ENCODE measurements at regions of chr4 and their contacts with region 1.

Region 1: DNA sequence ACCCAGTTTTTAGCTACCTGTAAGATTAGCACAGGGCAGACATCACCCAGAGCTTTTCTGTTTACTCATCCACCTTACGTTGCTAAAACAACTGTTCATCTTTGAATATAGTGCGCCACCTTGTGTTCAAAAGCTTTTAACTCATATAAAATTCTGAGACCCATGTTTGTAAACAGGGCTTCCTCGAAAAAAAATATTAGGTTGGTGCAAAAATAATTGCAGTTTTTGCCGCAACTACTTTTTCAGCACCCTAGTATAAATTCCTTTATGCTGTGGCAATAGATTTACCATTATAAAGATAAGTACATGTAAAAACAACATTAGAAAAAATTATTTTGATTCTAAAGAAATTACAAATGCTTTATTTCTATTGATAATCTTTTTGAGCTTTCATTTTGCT is 147.9 kb downstream of the LRBA start:
- DNase-seq: peak; percentile 60 to 72
- H3K4me3 ChIP-seq: no peak overlapping the region
- H3K4me1 ChIP-seq: no peaks in the 10 kb centered on the region
- H3K27me3 ChIP-seq: no peaks in the 10 kb centered on the region

Region 2: GRCh38 chr4:150010525-150011126 is 856.5 kb before region 1 on chr4:
- in situ Hi-C with region 1: loop called (anchors 25 kb)
- DNase-seq: peak; percentile 61 to 72
- H3K4me3 ChIP-seq: no peak overlapping the region
- H3K4me1 ChIP-seq: peaks cover 10% of the 10 kb centered on the region
- H3K27me3 ChIP-seq: no peaks in the 10 kb centered on the region

Region 3: GRCh38 chr4:150297861-150298474 is 569.2 kb before region 1 on chr4:
- in situ Hi-C with region 1: loop called (anchors 10 kb)
- DNase-seq: peak; percentile 55 to 67
- H3K4me3 ChIP-seq: no peak overlapping the region
- H3K4me1 ChIP-seq: peaks cover 7% of the 10 kb centered on the region
- H3K27me3 ChIP-seq: no peaks in the 10 kb centered on the region

Region 4: GRCh38 chr4:150694438-150694837 is 172.7 kb before region 1 on chr4:
- in situ Hi-C with region 1: no loop called
- DNase-seq: peak; percentile 38 to 66
- H3K4me3 ChIP-seq: no peak overlapping the region
- H3K4me1 ChIP-seq: peaks cover 12% of the 10 kb centered on the region; the same call in 1 of the 2 replicates
- H3K27me3 ChIP-seq: no peaks in the 10 kb centered on the region

Measured in HAP-1 (cell line).